ENCODE measurements at regions of chr18 and their contacts with region 1.

Region 1: DNA sequence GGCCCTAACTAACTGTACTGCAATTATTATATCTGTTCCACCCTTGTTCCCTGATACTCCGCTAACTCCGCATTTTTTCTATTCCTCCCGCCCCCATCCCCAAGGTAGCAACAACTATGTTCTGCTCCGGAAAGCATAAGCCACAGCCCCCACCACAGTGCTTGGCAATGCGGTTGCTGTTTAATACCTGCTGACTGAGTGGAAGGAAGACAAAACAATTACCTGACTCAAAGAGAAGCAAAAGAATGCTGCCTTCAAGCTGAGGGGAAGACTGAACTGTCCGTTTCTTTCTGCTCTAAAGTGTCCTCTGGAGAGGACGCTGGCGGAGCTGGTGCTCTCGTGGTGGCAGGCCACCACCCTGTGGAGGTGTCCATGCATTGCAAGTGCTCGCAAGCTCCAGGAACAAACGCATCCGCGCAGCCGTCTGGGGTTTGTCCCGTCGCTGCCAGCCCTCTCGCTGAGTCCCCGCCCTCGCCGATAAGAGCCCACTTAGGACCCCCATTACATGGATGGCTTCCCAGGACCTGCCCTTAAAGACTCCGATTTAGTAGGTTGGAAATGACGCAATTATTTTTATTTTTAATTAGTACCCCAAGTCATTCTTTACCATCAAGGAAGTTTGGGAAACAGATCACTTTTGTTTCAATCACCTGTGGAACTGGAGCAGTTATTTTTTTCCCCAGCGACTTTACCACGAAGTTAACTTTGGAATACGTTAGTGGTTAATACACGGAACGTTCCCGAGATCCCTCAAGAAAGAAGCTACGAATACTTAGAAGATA is 1.6 kb upstream of the MYL12A start:
- DNase-seq: peak; percentile 90 to 94 (median 93)
- ATAC-seq: peak; percentile 70 to 76 (median 73)
- H3K4me3 ChIP-seq: peak overlapping the region; percentile 24 to 98 (median 90)
- H3K27ac ChIP-seq: peak overlapping the region; percentile 98 to 100 (median 100)
- H3K4me1 ChIP-seq: peaks cover 0 to 47% (median 33%) of the 10 kb centered on the region in 12 donors
- H3K27me3 ChIP-seq: no peaks in the 10 kb centered on the region
- CTCF ChIP-seq: peak; percentile 92 to 99 (median 96)
- POLR2A ChIP-seq: peak in 1 of 2 donors; percentile 22

Region 2: GRCh38 chr18:2958819-2959298 is 287.2 kb before region 1 on chr18:
- intact Hi-C with region 1: loop called in 1 of 10 experiments (anchors 10 kb)
- DNase-seq: no peak
- ATAC-seq: peak in 3 of 4 donors; percentile 51 to 63 (median 54)
- H3K4me3 ChIP-seq: peak overlapping the region in 1 of 12 donors; percentile 12
- H3K27ac ChIP-seq: peak overlapping the region in 11 of 12 donors; percentile 1 to 95 (median 45)
- H3K4me1 ChIP-seq: peaks cover 5 to 80% (median 32%) of the 10 kb centered on the region in 12 donors
- H3K27me3 ChIP-seq: no peaks in the 10 kb centered on the region
- CTCF ChIP-seq: no peak
- POLR2A ChIP-seq: no peak

Region 3: GRCh38 chr18:3129053-3129864 is 116.8 kb before region 1 on chr18:
- intact Hi-C with region 1: loop called in 1 of 10 experiments (anchors 1 kb)
- DNase-seq: peak; percentile 75 to 89 (median 80)
- ATAC-seq: peak; percentile 74 to 89 (median 88)
- H3K4me3 ChIP-seq: no peak overlapping the region
- H3K27ac ChIP-seq: peak overlapping the region in 1 of 12 donors; percentile 3
- H3K4me1 ChIP-seq: peaks cover 0 to 17% (median 0%) of the 10 kb centered on the region in 12 donors
- H3K27me3 ChIP-seq: no peaks in the 10 kb centered on the region
- CTCF ChIP-seq: peak; percentile 59 to 89 (median 78)
- POLR2A ChIP-seq: no peak

Region 4: DNA sequence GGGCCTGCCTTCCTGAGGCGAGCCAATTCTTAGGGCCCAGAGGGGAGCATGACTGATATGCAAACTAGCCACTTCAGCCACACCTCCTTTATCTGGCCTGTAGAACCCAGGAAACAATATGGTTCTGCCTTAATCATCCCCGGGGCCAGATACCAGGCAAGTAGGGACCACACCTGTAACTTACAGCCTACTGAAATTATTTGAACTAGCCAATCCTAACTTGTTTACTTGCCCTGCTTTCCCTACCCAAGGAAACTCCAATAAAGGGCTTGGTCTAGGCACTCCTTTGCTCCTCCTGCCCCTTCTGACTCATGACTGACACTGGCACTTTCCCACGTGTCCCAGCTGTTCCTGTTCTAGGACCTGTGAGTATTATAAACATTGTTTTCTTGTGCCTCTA is 83.9 kb before region 1 on chr18:
- intact Hi-C with region 1: loop called in 5 of 10 experiments (anchors 5 to 10 kb)
- DNase-seq: no peak
- ATAC-seq: peak in 1 of 4 donors; percentile 33
- H3K4me3 ChIP-seq: no peak overlapping the region
- H3K27ac ChIP-seq: no peak overlapping the region
- H3K4me1 ChIP-seq: peaks cover 0 to 16% (median 4%) of the 10 kb centered on the region in 12 donors
- H3K27me3 ChIP-seq: no peaks in the 10 kb centered on the region
- CTCF ChIP-seq: no peak
- POLR2A ChIP-seq: no peak

Region 5: GRCh38 chr18:3186678-3187658 is 59.1 kb before region 1 on chr18:
- intact Hi-C with region 1: loop called in 3 of 10 experiments (anchors 2 to 10 kb)
- DNase-seq: peak in 1 of 5 donors; percentile 33
- ATAC-seq: peak in 3 of 4 donors; percentile 25 to 50 (median 32)
- H3K4me3 ChIP-seq: no peak overlapping the region
- H3K27ac ChIP-seq: peak overlapping the region in 1 of 12 donors; percentile 2
- H3K4me1 ChIP-seq: peaks cover 0 to 35% (median 9%) of the 10 kb centered on the region in 12 donors
- H3K27me3 ChIP-seq: no peaks in the 10 kb centered on the region
- CTCF ChIP-seq: peak in 8 of 12 donors; percentile 7 to 41 (median 24)
- POLR2A ChIP-seq: no peak

Region 6: GRCh38 chr18:3217948-3218647 is 27.9 kb before region 1 on chr18:
- intact Hi-C with region 1: loop called in 3 of 10 experiments (anchors 2 to 5 kb)
- DNase-seq: peak in 1 of 5 donors; percentile 37
- ATAC-seq: peak; percentile 41 to 55 (median 53)
- H3K4me3 ChIP-seq: peak overlapping the region; percentile 4 to 70 (median 60)
- H3K27ac ChIP-seq: peak overlapping the region; percentile 77 to 97 (median 90)
- H3K4me1 ChIP-seq: peaks cover 0 to 34% (median 9%) of the 10 kb centered on the region in 12 donors
- H3K27me3 ChIP-seq: no peaks in the 10 kb centered on the region
- CTCF ChIP-seq: no peak
- POLR2A ChIP-seq: peak; percentile 12 to 54

Measured in heart left ventricle (tissue), 16 donors.